Gastrocnemius medialis (tissue), 4 donors: ENCODE measurements at regions of chr9 and their contacts with region 1.

Region 1: DNA sequence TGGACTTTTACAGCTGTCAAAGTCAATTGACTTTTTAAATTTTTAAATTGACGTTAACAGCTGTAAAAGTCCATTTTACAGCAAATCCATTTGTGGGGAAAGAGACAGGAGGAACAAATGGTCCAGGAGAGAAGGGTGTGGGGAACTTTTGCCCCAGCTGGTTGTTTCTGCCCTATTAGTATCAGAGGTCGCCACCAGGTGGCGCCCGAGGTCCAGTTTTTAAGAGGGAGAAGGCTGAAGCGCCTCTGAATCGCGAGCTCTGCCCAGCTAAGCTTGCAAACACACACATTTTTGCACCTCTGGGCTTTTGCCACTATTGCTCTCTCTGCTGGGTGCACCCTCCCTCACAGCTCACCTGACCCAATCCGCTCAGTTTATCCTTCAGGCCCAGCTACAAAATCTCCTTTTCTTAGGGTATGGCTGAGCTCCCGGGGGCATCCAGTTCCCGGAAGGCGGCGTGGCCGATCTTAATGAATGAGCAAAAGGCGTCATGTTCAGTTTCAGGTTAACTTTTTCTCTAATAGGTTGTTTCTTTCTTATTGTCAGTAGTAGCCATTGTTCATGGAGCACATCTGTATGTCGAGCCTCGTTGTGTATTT is 6.3 kb upstream of the TTLL11 start:
- DNase-seq: peak; percentile 47 to 74
- ATAC-seq: peak; percentile 72 to 85
- H3K4me3 ChIP-seq: peak overlapping the region in 3 of 4 donors; percentile 8 to 61 (median 45)
- H3K27ac ChIP-seq: no peak overlapping the region
- H3K4me1 ChIP-seq: peaks cover 4 to 18% of the 10 kb centered on the region in 2 donors
- H3K27me3 ChIP-seq: no peaks in the 10 kb centered on the region
- CTCF ChIP-seq: peak; percentile 74 to 91 (median 87)
- POLR2A ChIP-seq: no peak

Region 2: GRCh38 chr9:122151267-122151828 is 52.0 kb after region 1 on chr9:
- in situ Hi-C with region 1: no loop called
- intact Hi-C with region 1: loop called (anchors 2 kb)
- DNase-seq: peak; percentile 22 to 72
- ATAC-seq: peak; percentile 89 to 98
- H3K4me3 ChIP-seq: no peak overlapping the region
- H3K27ac ChIP-seq: peak overlapping the region; percentile 69 to 77 (median 76)
- H3K4me1 ChIP-seq: peaks cover 33 to 46% of the 10 kb centered on the region in 2 donors
- H3K27me3 ChIP-seq: no peaks in the 10 kb centered on the region
- CTCF ChIP-seq: peak in 3 of 5 experiments; percentile 14 to 30 (median 26)
- POLR2A ChIP-seq: no peak

Region 3: GRCh38 chr9:122350638-122351355 is 251.4 kb after region 1 on chr9:
- in situ Hi-C with region 1: no loop called
- intact Hi-C with region 1: loop called (anchors 1 kb)
- DNase-seq: peak; percentile 50 to 65
- ATAC-seq: peak; percentile 80 to 88
- H3K4me3 ChIP-seq: no peak overlapping the region
- H3K27ac ChIP-seq: no peak overlapping the region
- H3K4me1 ChIP-seq: peaks cover 0 to 8% of the 10 kb centered on the region in 2 donors
- H3K27me3 ChIP-seq: no peaks in the 10 kb centered on the region
- CTCF ChIP-seq: peak; percentile 92 to 96 (median 96)
- POLR2A ChIP-seq: no peak